ENCODE measurements at regions of chr12 and their contacts with region 1.

Region 1: GRCh38 chr12:107131832-107132616 is 38.7 kb upstream of the CRY1 start:
- DNase-seq: no peak
- H3K4me3 ChIP-seq: no peak overlapping the region
- H3K27ac ChIP-seq: no peak overlapping the region
- H3K4me1 ChIP-seq: peaks cover 0 to 3% (median 0%) of the 10 kb centered on the region in 4 donors
- H3K27me3 ChIP-seq: no peaks in the 10 kb centered on the region
- CTCF ChIP-seq: peak; percentile 71 to 80 (median 74)
- EP300 ChIP-seq: no peak
- POLR2A ChIP-seq: no peak

Region 2: DNA sequence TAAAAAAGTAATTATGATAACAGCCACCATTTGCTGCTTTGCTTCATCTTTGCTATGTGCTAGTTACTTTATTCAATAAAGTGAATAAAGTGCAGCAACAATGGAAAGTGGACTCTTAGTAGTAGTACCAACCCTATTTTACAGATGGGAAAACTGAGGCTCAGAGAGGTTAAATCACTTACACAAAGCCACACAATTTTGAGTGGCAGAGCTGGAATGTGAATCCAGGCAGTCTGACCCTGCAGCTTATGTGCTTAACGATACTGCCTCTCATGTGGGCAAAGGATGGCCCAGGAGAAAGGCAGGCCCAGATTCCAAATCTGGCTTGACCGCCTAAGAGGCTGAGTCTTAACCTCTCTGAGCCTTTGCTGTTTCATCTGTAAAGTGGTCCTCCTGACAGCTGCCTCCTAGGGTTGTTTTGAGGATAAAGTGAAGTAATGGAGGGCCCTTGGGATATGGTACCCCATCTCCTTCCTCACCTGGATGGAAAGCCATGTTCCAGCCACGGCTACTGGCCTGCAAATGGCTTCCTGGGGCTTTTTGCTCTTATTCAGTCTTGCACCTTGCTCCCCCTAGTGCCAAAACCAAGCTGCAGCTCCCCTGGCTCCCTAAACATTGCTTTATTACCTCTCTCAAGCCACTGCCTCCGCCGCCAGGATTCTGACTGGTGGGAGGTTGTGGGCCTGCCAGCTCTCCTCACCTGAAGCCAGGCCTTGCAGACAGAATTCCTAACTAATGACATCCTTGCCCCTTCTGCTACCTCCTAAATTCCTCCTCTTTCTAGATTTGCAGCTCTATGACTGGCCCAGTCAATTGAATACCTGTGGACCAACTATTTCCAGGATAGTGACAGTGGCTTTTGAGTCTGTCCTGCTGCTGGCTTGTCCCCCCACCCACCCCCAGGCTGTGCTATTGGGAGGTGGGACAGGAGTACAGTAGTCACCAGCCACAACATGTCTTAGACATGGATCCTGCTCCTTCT is 270.3 kb after region 1 on chr12:
- in situ Hi-C with region 1: loop called (anchors 10 to 25 kb)
- intact Hi-C with region 1: no loop called
- DNase-seq: peak; percentile 51
- H3K4me3 ChIP-seq: no peak overlapping the region
- H3K27ac ChIP-seq: no peak overlapping the region
- H3K4me1 ChIP-seq: no peaks in the 10 kb centered on the region
- H3K27me3 ChIP-seq: no peaks in the 10 kb centered on the region
- CTCF ChIP-seq: peak; percentile 24 to 58 (median 46)
- EP300 ChIP-seq: no peak
- POLR2A ChIP-seq: no peak

Region 3: GRCh38 chr12:107600581-107601144 is 468.6 kb after region 1 on chr12:
- in situ Hi-C with region 1: loop called in 3 of 4 experiments (anchors 5 kb)
- intact Hi-C with region 1: loop called (anchors 5 kb)
- DNase-seq: no peak
- H3K4me3 ChIP-seq: no peak overlapping the region
- H3K27ac ChIP-seq: no peak overlapping the region
- H3K4me1 ChIP-seq: no peaks in the 10 kb centered on the region
- H3K27me3 ChIP-seq: no peaks in the 10 kb centered on the region
- CTCF ChIP-seq: no peak
- EP300 ChIP-seq: no peak
- POLR2A ChIP-seq: no peak

Region 4: DNA sequence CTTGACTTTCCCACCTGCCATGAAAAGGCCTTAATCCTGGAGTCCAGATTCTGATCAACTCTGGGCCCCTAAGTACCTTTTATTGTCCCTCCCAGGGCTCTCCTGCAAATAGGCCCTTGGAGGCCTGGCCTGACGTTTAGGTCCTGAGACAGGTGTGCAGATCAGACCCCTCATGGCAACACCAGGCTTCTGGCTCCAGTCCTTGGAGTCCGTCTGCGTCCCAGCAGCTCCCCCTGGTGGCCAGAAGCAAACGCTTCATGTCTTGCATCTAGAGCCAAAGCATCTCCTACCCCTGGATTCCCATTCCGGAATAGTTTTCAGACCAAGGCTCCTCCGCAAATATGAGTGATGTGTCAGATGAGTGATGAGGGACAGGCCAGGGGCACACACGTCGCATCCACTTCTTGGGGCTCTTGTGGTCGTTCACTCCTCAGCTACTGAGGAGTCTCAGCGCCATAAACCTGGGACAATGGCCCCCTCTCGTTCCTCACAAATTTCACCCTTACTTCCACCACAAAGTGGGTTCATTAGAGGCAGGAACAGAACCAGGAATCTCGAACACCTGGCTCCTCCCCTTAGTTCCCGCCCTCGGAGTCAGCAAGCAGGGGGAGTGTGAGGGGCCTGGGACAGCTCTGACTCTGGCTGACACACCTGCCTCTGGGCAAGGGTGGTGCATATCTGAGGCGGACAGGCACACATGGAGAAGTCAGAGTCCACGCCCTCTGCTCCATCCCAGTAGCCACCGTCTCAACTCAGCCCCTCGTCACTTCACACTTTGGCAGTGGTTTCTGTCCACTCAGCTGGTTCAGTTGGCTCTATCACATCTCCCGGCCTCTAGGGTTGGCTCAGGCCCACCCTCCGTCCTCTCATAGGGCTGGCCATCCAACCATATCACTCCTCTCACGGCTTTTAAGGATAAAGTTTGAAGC is 475.7 kb after region 1 on chr12:
- in situ Hi-C with region 1: loop called (anchors 5 to 10 kb)
- intact Hi-C with region 1: loop called (anchors 5 kb)
- DNase-seq: peak; percentile 81
- H3K4me3 ChIP-seq: no peak overlapping the region
- H3K27ac ChIP-seq: no peak overlapping the region
- H3K4me1 ChIP-seq: no peaks in the 10 kb centered on the region
- H3K27me3 ChIP-seq: no peaks in the 10 kb centered on the region
- CTCF ChIP-seq: peak; percentile 80 to 93 (median 83)
- EP300 ChIP-seq: no peak
- POLR2A ChIP-seq: no peak

Measured in transverse colon (tissue), 4 donors.